Heart right ventricle (tissue), 16 donors: ENCODE measurements at regions of chr13 and their contacts with region 1.

Region 1: DNA sequence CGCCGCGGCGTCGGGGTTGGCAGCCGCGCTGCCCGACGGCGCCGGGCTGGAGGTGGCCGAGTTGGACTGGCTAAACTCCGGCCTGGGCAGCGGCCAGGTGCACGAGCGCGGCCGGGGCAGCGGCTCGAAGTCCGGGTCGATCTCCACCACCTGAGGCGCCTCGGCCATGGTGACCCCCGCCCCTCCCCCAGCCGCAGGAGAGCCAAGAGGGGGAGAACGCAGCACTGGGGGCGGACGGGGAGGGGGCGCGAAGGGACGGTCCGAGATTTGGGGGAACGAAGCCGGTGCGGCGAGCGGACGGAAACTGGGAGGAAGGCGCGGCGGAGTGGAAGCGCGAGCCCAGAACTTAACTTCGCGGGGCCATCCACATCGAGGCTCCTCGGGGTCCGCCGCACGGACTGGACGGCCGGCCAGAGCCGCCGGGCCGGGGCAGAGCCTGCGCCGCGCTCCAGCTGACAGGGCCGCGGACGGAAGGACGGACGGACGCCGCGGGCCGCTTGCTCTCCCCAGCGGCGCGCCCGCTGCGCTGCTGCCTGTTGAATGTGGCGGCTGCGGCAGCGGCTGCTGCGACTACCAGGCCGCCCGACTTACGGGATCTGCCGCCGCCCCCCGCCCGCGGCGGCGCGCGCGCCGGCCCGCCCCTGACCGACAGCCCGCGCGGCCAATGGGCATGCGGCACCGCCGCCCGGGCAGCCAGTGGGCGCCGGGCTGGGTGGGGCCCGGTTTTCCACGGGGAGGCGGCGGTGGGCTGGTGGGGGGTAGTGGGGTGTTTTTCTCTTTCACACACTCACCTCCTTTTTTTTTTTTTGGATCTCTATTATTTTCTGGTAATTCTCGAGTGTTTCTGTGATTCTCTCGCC is at the start of gene FOXO1:
- DNase-seq: peak; percentile 91 to 93
- ATAC-seq: peak; percentile 81 to 88 (median 87)
- H3K4me3 ChIP-seq: peak within 1 kb of the TSS; percentile 81 to 97 (median 92)
- H3K27ac ChIP-seq: peak within 1 kb of the TSS; percentile 95 to 99 (median 98)
- H3K4me1 ChIP-seq: peaks cover 0 to 46% (median 41%) of the 10 kb centered on the region in 9 donors
- H3K27me3 ChIP-seq: no peaks in the 10 kb centered on the region
- CTCF ChIP-seq: peak in 1 of 9 donors; percentile 8
- total RNA-seq, gene FOXO1: 12.3 to 31.2 (median 17.3) TPM

Region 2: GRCh38 chr13:40069173-40070044 is 596.9 kb before region 1 on chr13:
- intact Hi-C with region 1: loop called in 4 of 10 experiments (anchors 5 kb)
- DNase-seq: peak; percentile 78 to 83
- ATAC-seq: peak; percentile 90 to 96 (median 92)
- H3K4me3 ChIP-seq: peak overlapping the region in 4 of 10 donors; percentile 3 to 25 (median 15)
- H3K27ac ChIP-seq: peak overlapping the region in 2 of 10 donors; percentile 3 to 4
- H3K4me1 ChIP-seq: peaks cover 0 to 17% (median 7%) of the 10 kb centered on the region in 9 donors
- H3K27me3 ChIP-seq: no peaks in the 10 kb centered on the region
- CTCF ChIP-seq: peak; percentile 68 to 94 (median 88)

Region 3: GRCh38 chr13:40230833-40231266 is 435.4 kb before region 1 on chr13:
- intact Hi-C with region 1: loop called in 1 of 10 experiments (anchors 10 kb)
- DNase-seq: no peak
- ATAC-seq: no peak
- H3K4me3 ChIP-seq: no peak overlapping the region
- H3K27ac ChIP-seq: peak overlapping the region in 2 of 10 donors; percentile 16 to 37
- H3K4me1 ChIP-seq: peaks cover 0 to 35% (median 15%) of the 10 kb centered on the region in 9 donors
- H3K27me3 ChIP-seq: no peaks in the 10 kb centered on the region
- CTCF ChIP-seq: no peak

Region 4: GRCh38 chr13:40401911-40402776 is 264.1 kb before region 1 on chr13:
- intact Hi-C with region 1: loop called in 6 of 10 experiments (anchors 5 to 10 kb)
- DNase-seq: peak; percentile 95
- ATAC-seq: peak; percentile 95 to 98 (median 96)
- H3K4me3 ChIP-seq: peak overlapping the region in 5 of 10 donors; percentile 2 to 23 (median 16)
- H3K27ac ChIP-seq: peak overlapping the region in 9 of 10 donors; percentile 40 to 87 (median 66)
- H3K4me1 ChIP-seq: peaks cover 2 to 43% (median 34%) of the 10 kb centered on the region in 9 donors
- H3K27me3 ChIP-seq: no peaks in the 10 kb centered on the region
- CTCF ChIP-seq: no peak

Region 5: GRCh38 chr13:40477623-40478608 is 188.4 kb before region 1 on chr13:
- intact Hi-C with region 1: loop called in 5 of 10 experiments (anchors 5 to 10 kb)
- DNase-seq: peak; percentile 61 to 69
- ATAC-seq: peak; percentile 48 to 83 (median 78)
- H3K4me3 ChIP-seq: peak overlapping the region in 1 of 10 donors; percentile 6
- H3K27ac ChIP-seq: peak overlapping the region; percentile 39 to 85 (median 58)
- H3K4me1 ChIP-seq: peaks cover 17 to 55% (median 45%) of the 10 kb centered on the region in 9 donors
- H3K27me3 ChIP-seq: no peaks in the 10 kb centered on the region
- CTCF ChIP-seq: no peak

Region 6: DNA sequence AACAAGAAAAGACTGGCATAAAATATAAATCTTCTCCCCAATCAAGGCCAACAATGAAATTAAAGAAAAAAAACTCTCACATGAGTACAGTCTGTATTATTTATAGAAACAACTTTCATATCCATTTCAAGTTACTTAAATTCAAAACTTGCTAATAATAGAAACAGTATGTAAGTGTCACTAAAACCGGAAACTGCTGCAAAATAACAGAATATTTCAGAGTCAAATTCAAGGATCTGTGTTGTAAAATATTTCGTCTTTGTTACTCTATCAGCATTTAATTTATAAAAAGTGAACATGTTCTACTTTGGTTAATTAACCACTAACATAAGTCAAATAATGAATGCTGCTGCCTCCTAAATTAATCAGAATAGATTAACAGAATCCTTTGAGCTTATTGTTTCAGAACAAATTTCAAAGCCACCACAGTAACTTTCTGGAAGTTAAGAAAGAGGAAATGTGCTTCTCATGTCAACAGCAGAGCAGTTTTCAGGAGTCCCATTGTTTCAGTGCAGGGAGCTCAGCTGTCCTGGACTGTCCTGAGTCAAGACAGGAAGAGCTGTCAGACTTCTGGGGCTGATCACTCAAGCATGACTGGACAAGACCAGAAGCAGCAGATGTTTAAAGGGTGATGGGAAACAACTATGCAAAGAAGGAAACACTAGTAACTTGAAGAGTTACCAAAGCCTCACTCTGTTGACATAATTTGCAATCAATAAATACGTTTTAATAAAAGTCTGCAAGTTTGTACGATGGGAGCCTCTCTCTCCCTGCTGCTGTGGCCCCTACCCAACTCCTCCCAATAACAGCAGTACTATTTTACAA is 76.8 kb before region 1 on chr13:
- intact Hi-C with region 1: loop called in 7 of 10 experiments (anchors 5 to 10 kb)
- DNase-seq: peak in 1 of 2 donors; percentile 70
- ATAC-seq: peak; percentile 80 to 92 (median 86)
- H3K4me3 ChIP-seq: peak overlapping the region in 1 of 10 donors; percentile 7
- H3K27ac ChIP-seq: peak overlapping the region; percentile 55 to 91 (median 68)
- H3K4me1 ChIP-seq: peaks cover 17 to 96% (median 75%) of the 10 kb centered on the region in 9 donors
- H3K27me3 ChIP-seq: no peaks in the 10 kb centered on the region
- CTCF ChIP-seq: no peak

Region 7: GRCh38 chr13:40897058-40897457 is 230.8 kb after region 1 on chr13:
- intact Hi-C with region 1: no loop called
- DNase-seq: no peak
- ATAC-seq: no peak
- H3K4me3 ChIP-seq: no peak overlapping the region
- H3K27ac ChIP-seq: no peak overlapping the region
- H3K4me1 ChIP-seq: peaks cover 0 to 4% (median 0%) of the 10 kb centered on the region in 9 donors
- H3K27me3 ChIP-seq: no peaks in the 10 kb centered on the region
- CTCF ChIP-seq: no peak